ENCODE measurements at regions of chr10 and their contacts with region 1.

Region 1: GRCh38 chr10:3538658-3539531 is 246.1 kb downstream of the KLF6 start:
- DNase-seq: no peak
- H3K4me3 ChIP-seq: no peak overlapping the region
- H3K27ac ChIP-seq: no peak overlapping the region
- H3K4me1 ChIP-seq: no peaks in the 10 kb centered on the region
- CTCF ChIP-seq: no peak

Region 2: GRCh38 chr10:3119796-3120459 is 419.0 kb before region 1 on chr10:
- CTCF ChIA-PET with region 1: no interaction called
- POLR2A ChIA-PET with region 1: no interaction called
- intact Hi-C with region 1: no loop called
- DNase-seq: peak; percentile 10
- H3K4me3 ChIP-seq: no peak overlapping the region
- H3K27ac ChIP-seq: no peak overlapping the region
- H3K4me1 ChIP-seq: no peaks in the 10 kb centered on the region
- CTCF ChIP-seq: peak; percentile 68

Region 3: GRCh38 chr10:3719024-3719843 is 180.3 kb after region 1 on chr10:
- CTCF ChIA-PET with region 1: interaction called, 16 read pairs
- POLR2A ChIA-PET with region 1: no interaction called
- intact Hi-C with region 1: no loop called
- DNase-seq: no peak
- H3K4me3 ChIP-seq: no peak overlapping the region
- H3K27ac ChIP-seq: no peak overlapping the region
- H3K4me1 ChIP-seq: no peaks in the 10 kb centered on the region
- CTCF ChIP-seq: no peak